Adrenal gland (tissue), 19 donors: ENCODE measurements at regions of chr20 and their contacts with region 1.

Region 1: GRCh38 chr20:48668451-48668952 is 159.3 kb downstream of the PREX1 start:
- DNase-seq: peak in 6 of 7 donors; percentile 66 to 80 (median 70)
- H3K4me3 ChIP-seq: no peak overlapping the region
- H3K27ac ChIP-seq: peak overlapping the region in 4 of 5 donors; percentile 59 to 84 (median 71)
- H3K4me1 ChIP-seq: peaks cover 15 to 18% of the 10 kb centered on the region in 2 donors
- H3K27me3 ChIP-seq: no peaks in the 10 kb centered on the region
- CTCF ChIP-seq: no peak
- POLR2A ChIP-seq: no peak

Region 2: DNA sequence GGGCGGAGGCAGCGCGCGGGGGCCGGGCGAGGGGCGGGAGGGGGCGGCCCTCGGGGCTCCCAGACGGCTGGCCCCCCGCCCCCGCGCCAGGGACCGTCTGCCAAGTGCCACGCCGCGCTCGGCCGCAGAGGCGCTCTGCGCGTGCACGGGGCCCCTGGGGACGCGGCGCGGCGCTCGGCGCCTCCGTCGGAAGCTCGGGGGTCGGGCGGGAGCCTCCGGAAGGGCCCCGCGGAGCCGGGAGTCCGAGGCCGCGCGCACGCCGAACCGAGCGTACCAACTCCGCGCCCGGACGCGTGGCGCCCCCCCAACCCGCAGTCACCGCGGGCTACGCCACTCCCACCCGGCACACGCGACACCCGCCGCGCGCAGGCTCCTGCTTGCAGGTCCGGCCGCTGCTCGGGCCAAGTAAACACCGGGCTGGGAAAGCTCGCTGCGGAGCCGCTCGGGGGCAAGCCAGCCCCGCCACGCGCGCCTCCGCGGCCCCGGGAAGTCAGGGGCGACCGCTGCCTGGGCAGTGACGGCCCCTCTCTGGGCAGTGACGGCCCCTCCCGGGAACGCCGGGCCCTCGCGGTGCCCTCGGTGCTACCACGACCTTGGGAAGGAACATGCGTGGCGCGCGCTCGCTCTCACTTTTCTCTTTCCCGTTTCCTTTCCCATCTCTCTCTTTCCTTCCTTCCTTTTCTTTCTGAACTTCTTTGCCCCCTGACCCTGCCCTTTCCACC is 159.7 kb after region 1 on chr20:
- intact Hi-C with region 1: loop called in 1 of 2 experiments (anchors 5 kb)
- DNase-seq: peak; percentile 78 to 86 (median 82)
- H3K4me3 ChIP-seq: peak overlapping the region in 2 of 4 donors; percentile 20 to 73
- H3K27ac ChIP-seq: peak overlapping the region in 3 of 5 donors; percentile 72 to 89 (median 80)
- H3K4me1 ChIP-seq: peaks cover 23 to 57% of the 10 kb centered on the region in 2 donors
- H3K27me3 ChIP-seq: no peaks in the 10 kb centered on the region
- CTCF ChIP-seq: peak in 3 of 6 experiments; percentile 39 to 56 (median 48)
- POLR2A ChIP-seq: peak in 1 of 2 donors; percentile 65